ENCODE measurements at regions of chr10 and their contacts with region 1.

Region 1: DNA sequence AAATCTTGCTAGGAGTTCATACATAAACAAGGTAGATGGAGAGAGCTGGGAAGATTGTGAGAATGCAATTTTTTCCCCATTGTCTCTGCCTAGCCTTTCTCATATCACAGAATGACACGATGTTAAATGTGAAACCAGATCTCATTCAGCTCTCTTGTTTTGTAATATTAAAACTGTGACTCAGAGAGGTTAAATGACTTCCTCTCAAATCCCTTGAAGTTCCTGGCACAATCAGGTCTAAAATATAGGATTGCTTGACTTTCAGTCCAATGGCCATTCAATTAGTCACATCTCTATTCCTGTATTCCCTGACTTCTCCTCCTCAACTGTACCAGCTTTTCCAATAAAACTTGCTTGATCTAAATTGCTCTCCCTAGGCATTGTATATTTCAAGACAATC is 3.1 kb downstream of the ANKRD22 start:
- DNase-seq: no peak
- H3K4me3 Mint-ChIP-seq: peak overlapping the region; percentile 69
- H3K27ac Mint-ChIP-seq: peak overlapping the region; percentile 92
- H3K4me1 Mint-ChIP-seq: peaks cover 51% of the 10 kb centered on the region
- H3K27me3 Mint-ChIP-seq: no peaks in the 10 kb centered on the region
- CTCF ChIP-seq: no peak

Region 2: DNA sequence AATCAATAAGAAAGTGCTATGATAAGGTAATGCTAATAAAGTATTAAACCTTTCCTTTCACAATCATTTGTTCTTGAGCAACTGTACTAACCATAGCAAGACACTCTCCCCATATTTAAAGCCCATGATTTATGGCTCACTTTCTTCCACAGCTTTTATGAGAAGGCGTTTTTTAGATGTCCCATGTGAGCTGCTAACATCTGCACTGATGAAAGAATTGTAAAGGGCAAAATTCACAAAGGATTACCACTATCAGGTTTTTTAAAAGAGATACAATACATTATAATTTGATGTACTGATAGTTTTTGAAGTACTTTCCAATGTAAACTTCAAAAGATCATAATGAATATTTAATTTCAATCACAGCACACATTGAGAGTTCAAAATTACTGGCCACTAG is 341.1 kb before region 1 on chr10:
- CTCF ChIA-PET with region 1: no interaction called
- intact Hi-C with region 1: no loop called
- DNase-seq: no peak
- H3K4me3 Mint-ChIP-seq: no peak overlapping the region
- H3K27ac Mint-ChIP-seq: no peak overlapping the region
- H3K4me1 Mint-ChIP-seq: peaks cover 3% of the 10 kb centered on the region
- H3K27me3 Mint-ChIP-seq: no peaks in the 10 kb centered on the region
- CTCF ChIP-seq: no peak

Region 3: DNA sequence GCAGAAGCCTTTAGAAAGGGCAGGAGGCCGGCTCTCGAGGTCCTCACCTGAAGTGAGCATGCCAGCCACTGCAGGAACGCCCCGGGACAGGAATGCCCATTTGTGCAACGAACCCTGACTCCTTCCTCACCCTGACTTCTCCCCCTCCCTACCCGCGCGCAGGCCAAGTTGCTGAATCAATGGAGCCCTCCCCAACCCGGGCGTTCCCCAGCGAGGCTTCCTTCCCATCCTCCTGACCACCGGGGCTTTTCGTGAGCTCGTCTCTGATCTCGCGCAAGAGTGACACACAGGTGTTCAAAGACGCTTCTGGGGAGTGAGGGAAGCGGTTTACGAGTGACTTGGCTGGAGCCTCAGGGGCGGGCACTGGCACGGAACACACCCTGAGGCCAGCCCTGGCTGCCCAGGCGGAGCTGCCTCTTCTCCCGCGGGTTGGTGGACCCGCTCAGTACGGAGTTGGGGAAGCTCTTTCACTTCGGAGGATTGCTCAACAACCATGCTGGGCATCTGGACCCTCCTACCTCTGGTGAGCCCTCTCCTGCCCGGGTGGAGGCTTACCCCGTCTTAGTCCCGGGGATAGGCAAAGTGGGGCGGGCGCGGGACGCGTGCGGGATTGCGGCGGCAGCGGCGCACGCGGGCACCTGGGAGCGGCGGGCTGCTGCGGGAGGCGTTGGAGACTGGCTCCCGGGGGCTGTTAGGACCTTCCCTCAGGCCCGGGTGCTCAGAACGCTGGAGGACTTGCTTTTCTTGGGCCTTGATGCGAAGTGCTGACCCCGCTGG is 142.1 kb after region 1 on chr10 and contains the start of gene FAS:
- CTCF ChIA-PET with region 1: no interaction called
- intact Hi-C with region 1: loop called (anchors 2 kb)
- DNase-seq: peak; percentile 53
- H3K4me3 Mint-ChIP-seq: peak within 1 kb of the TSS; percentile 92
- H3K27ac Mint-ChIP-seq: peak within 1 kb of the TSS; percentile 54
- H3K4me1 Mint-ChIP-seq: peaks cover 17% of the 10 kb centered on the region
- H3K27me3 Mint-ChIP-seq: no peaks in the 10 kb centered on the region
- CTCF ChIP-seq: no peak
- total RNA-seq, gene FAS: 3.1 and 5.5 TPM in 2 replicates